Dorsolateral prefrontal cortex (tissue), 120 donors: ENCODE measurements at regions of chr4 and their contacts with region 1.

Region 1: DNA sequence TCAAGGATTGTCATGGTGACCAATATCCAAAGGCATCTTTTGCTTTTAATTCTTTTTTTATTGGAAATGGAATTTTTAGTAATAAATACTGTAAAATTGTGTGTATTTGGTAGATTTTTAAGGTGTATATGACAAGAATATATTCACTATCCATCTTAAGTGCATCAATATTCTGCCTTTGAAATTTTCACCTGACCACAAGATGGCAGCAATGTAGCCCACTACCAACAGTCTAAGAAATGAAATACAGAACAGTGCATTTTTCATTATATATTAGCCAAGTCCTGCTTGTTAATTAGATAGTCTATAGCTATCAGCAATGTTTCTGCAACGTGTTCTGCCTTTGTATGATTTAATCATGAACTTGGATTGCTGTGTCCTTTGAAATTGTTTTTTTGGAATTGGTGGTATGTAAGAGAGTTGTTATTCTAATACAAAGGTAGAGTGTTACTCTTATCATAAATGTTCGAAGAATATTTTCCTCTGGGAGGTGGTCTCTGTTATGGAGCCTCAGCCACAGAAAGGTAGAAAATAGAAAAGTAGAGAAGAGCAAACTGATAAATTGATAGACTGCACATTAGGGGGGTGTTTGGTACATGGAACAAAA is 38.2 kb downstream of the HPGDS start:
- DNase-seq: no peak
- H3K4me3 ChIP-seq: no peak overlapping the region
- H3K27ac ChIP-seq: no peak overlapping the region
- H3K27me3 ChIP-seq: no peaks in the 10 kb centered on the region
- CTCF ChIP-seq: peak in 55 of 56 donors; percentile 37 to 82 (median 61)

Region 2: GRCh38 chr4:94390804-94391410 is 86.4 kb after region 1 on chr4:
- intact Hi-C with region 1: loop called in 1 of 2 experiments (anchors 10 kb)
- DNase-seq: no peak
- H3K4me3 ChIP-seq: no peak overlapping the region
- H3K27ac ChIP-seq: no peak overlapping the region
- H3K27me3 ChIP-seq: peaks cover 0 to 6% (median 0%) of the 10 kb centered on the region in 45 donors
- CTCF ChIP-seq: peak in 53 of 56 donors; percentile 11 to 71 (median 41)